Endothelial cell of umbilical vein (primary cell): ENCODE measurements at regions of chr11 and their contacts with region 1.

Region 1: GRCh38 chr11:124953753-124954589 is at the start of gene CCDC15:
- DNase-seq: peak; percentile 98
- H3K4me3 ChIP-seq: peak within 1 kb of the TSS; percentile 14 to 66 (median 57)
- H3K27ac ChIP-seq: peak within 1 kb of the TSS; percentile 72
- H3K4me1 ChIP-seq: peaks cover 13% of the 10 kb centered on the region
- H3K27me3 ChIP-seq: peaks cover 0 to 3% of the 10 kb centered on the region in 2 experiments
- CTCF ChIP-seq: no peak
- POLR2A ChIP-seq: peak; percentile 93
- total RNA-seq, gene CCDC15: 3.8 and 4.6 TPM in 2 replicates

Region 2: GRCh38 chr11:124882339-124883071 is 71.5 kb before region 1 on chr11:
- CTCF ChIA-PET with region 1: interaction called, 4 read pairs
- POLR2A ChIA-PET with region 1: interaction called, 16 read pairs
- dilution Hi-C with region 1: no loop called
- intact Hi-C with region 1: loop called (anchors 1 kb)
- DNase-seq: peak; percentile 74
- H3K4me3 ChIP-seq: no peak overlapping the region
- H3K27ac ChIP-seq: peak overlapping the region; percentile 33
- H3K4me1 ChIP-seq: peaks cover 59% of the 10 kb centered on the region
- H3K27me3 ChIP-seq: no peaks in the 10 kb centered on the region
- CTCF ChIP-seq: peak in 1 of 2 donors; percentile 24
- POLR2A ChIP-seq: peak; percentile 87

Region 3: DNA sequence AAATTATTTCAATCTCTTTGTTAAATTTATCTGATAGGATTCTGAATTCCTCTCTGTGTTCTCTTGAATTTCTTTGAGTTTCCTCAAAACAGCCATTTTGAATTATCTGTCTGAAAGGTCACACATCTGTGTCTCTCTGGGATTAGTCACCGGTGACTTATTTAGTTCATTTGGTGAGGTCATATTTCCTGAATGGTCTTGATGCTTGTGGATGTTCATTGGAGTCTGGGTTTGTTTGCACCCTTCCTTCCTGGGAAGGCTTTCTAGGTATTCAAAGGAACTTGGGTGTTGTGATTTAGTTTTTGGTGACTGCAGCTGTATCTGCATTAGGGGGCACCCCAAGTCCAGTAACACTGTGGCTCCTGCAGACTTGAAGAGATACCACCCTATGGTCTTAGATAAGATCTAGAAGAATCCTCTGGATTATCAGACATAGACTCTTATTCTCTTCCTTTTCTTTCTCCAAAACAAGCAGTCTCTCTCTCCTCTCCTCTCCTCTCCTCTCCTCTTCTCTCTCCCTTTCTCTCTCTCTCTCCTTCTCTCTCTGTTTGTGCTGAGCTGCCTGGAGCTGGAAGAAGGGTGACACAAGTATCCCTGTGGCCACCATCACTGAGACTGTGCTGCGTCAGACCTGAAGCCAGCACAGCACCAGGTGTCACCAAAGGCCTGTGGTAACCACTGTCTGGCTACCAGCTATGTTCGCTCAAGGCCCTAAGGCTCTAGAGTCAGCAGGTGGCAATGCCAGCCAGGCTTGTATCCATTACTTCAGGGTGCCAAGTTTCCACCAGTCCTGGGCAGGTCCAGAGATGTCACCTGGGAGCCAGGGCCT is 38.2 kb before region 1 on chr11:
- CTCF ChIA-PET with region 1: interaction called, 3 read pairs
- POLR2A ChIA-PET with region 1: no interaction called
- dilution Hi-C with region 1: no loop called
- intact Hi-C with region 1: loop called (anchors 1 kb)
- DNase-seq: peak; percentile 60
- H3K4me3 ChIP-seq: no peak overlapping the region
- H3K27ac ChIP-seq: peak overlapping the region; percentile 83
- H3K4me1 ChIP-seq: peaks cover 16% of the 10 kb centered on the region
- H3K27me3 ChIP-seq: no peaks in the 10 kb centered on the region
- CTCF ChIP-seq: no peak
- POLR2A ChIP-seq: no peak

Region 4: GRCh38 chr11:124920870-124921609 is 32.9 kb before region 1 on chr11:
- CTCF ChIA-PET with region 1: interaction called, 3 read pairs
- POLR2A ChIA-PET with region 1: no interaction called
- dilution Hi-C with region 1: no loop called
- intact Hi-C with region 1: loop called (anchors 2 kb)
- DNase-seq: peak; percentile 82
- H3K4me3 ChIP-seq: peak overlapping the region in 2 of 3 experiments; percentile 31 to 39
- H3K27ac ChIP-seq: peak overlapping the region; percentile 22
- H3K4me1 ChIP-seq: peaks cover 9% of the 10 kb centered on the region
- H3K27me3 ChIP-seq: no peaks in the 10 kb centered on the region
- CTCF ChIP-seq: no peak
- POLR2A ChIP-seq: peak; percentile 62

Region 5: GRCh38 chr11:124934862-124935547 is 19.0 kb before region 1 on chr11:
- CTCF ChIA-PET with region 1: interaction called, 3 read pairs
- POLR2A ChIA-PET with region 1: interaction called, 3 read pairs
- dilution Hi-C with region 1: no loop called
- intact Hi-C with region 1: loop called (anchors 2 kb)
- DNase-seq: peak; percentile 35
- H3K4me3 ChIP-seq: no peak overlapping the region
- H3K27ac ChIP-seq: no peak overlapping the region
- H3K4me1 ChIP-seq: peaks cover 6% of the 10 kb centered on the region
- H3K27me3 ChIP-seq: peaks cover 0 to 3% of the 10 kb centered on the region in 2 experiments
- CTCF ChIP-seq: no peak
- POLR2A ChIP-seq: no peak

Region 6: DNA sequence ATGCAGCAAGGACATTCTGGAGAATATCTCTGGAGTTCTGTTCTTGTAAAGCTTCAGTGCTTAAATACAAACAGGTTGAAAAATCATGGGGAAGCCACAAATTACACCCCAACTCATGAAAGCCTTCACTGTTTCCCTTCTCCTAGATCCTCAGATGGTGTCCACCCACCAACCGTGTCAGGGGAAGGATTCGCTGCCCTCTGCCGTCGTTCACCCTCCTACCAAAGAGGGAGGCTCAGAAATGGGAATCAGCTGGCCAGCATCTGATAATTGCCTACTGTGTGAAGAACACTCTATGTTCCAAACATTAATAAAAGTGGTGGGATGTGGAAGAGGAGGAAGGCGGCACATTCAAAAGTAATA is 10.7 kb before region 1 on chr11:
- CTCF ChIA-PET with region 1: interaction called, 14 read pairs
- POLR2A ChIA-PET with region 1: interaction called, 6 read pairs
- dilution Hi-C with region 1: no loop called
- intact Hi-C with region 1: no loop called
- DNase-seq: no peak
- H3K4me3 ChIP-seq: no peak overlapping the region
- H3K27ac ChIP-seq: no peak overlapping the region
- H3K4me1 ChIP-seq: no peaks in the 10 kb centered on the region
- H3K27me3 ChIP-seq: no peaks in the 10 kb centered on the region
- CTCF ChIP-seq: peak in 1 of 2 donors; percentile 5
- POLR2A ChIP-seq: no peak